ENCODE measurements at regions of chrX and their contacts with region 1.

Region 1: GRCh38 chrX:24054182-24055042 is at the start of gene EIF2S3:
- DNase-seq: peak; percentile 72 to 94 (median 83)
- ATAC-seq: peak; percentile 86
- H3K4me3 ChIP-seq: peak within 1 kb of the TSS; percentile 95
- H3K4me3 Mint-ChIP-seq: no peak within 1 kb of the TSS
- H3K27ac ChIP-seq: peak within 1 kb of the TSS; percentile 89 to 95
- H3K27ac Mint-ChIP-seq: no peak within 1 kb of the TSS
- H3K4me1 ChIP-seq: peaks cover 5% of the 10 kb centered on the region
- H3K4me1 Mint-ChIP-seq: peaks cover 17% of the 10 kb centered on the region
- H3K27me3 ChIP-seq: no peaks in the 10 kb centered on the region
- H3K27me3 Mint-ChIP-seq: no peaks in the 10 kb centered on the region
- CTCF ChIP-seq: peak; percentile 58
- total RNA-seq, gene EIF2S3: 197 to 202 TPM

Region 2: GRCh38 chrX:23694606-23695005 is 359.8 kb before region 1 on chrX:
- CTCF ChIA-PET with region 1: no interaction called
- POLR2A ChIA-PET with region 1: interaction called, 3 read pairs
- intact Hi-C with region 1: loop called (anchors 10 kb)
- DNase-seq: peak; percentile 10 to 73 (median 28)
- ATAC-seq: peak; percentile 71
- H3K4me3 ChIP-seq: no peak overlapping the region
- H3K4me3 Mint-ChIP-seq: no peak overlapping the region
- H3K27ac ChIP-seq: no peak overlapping the region
- H3K27ac Mint-ChIP-seq: no peak overlapping the region
- H3K4me1 ChIP-seq: no peaks in the 10 kb centered on the region
- H3K4me1 Mint-ChIP-seq: no peaks in the 10 kb centered on the region
- H3K27me3 ChIP-seq: no peaks in the 10 kb centered on the region
- H3K27me3 Mint-ChIP-seq: no peaks in the 10 kb centered on the region
- CTCF ChIP-seq: peak; percentile 20

Region 3: DNA sequence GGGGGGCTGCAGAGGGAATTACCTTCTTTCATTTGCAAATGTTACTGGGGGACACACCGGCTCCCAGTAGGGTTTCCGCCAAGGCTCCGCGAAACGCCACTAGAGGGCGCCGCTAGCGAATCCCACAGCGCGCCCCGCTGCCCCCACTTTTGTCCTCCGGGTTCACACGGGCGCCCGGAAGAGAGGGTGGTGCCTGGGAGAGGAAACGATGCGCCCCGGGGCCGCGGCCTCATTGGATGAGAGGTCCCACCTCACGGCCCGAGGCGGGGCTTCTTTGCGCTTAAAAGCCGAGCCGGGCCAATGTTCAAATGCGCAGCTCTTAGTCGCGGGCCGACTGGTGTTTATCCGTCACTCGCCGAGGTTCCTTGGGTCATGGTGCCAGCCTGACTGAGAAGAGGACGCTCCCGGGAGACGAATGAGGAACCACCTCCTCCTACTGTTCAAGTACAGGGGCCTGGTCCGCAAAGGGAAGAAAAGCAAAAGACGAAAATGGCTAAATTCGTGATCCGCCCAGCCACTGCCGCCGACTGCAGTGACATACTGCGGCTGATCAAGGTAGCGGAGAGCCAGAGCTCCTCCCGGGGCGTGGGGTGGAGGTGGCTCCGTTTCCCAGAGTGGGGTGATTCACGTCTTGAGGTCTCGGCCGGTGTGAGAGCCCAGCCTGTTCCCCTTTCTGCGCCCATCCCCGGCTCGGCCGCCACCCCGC is 271.4 kb before region 1 on chrX and contains the start of gene SAT1:
- CTCF ChIA-PET with region 1: interaction called, 6 read pairs
- POLR2A ChIA-PET with region 1: interaction called, 27 read pairs
- intact Hi-C with region 1: loop called (anchors 1 to 10 kb)
- DNase-seq: peak; percentile 84 to 96 (median 91)
- ATAC-seq: peak; percentile 88
- H3K4me3 ChIP-seq: peak within 1 kb of the TSS; percentile 91
- H3K4me3 Mint-ChIP-seq: peak within 1 kb of the TSS; percentile 98
- H3K27ac ChIP-seq: peak within 1 kb of the TSS; percentile 74 to 90
- H3K27ac Mint-ChIP-seq: peak within 1 kb of the TSS; percentile 97
- H3K4me1 ChIP-seq: peaks cover 19% of the 10 kb centered on the region
- H3K4me1 Mint-ChIP-seq: peaks cover 44% of the 10 kb centered on the region
- H3K27me3 ChIP-seq: no peaks in the 10 kb centered on the region
- H3K27me3 Mint-ChIP-seq: no peaks in the 10 kb centered on the region
- CTCF ChIP-seq: peak; percentile 65
- total RNA-seq, gene SAT1: 305 to 312 TPM

Region 4: DNA sequence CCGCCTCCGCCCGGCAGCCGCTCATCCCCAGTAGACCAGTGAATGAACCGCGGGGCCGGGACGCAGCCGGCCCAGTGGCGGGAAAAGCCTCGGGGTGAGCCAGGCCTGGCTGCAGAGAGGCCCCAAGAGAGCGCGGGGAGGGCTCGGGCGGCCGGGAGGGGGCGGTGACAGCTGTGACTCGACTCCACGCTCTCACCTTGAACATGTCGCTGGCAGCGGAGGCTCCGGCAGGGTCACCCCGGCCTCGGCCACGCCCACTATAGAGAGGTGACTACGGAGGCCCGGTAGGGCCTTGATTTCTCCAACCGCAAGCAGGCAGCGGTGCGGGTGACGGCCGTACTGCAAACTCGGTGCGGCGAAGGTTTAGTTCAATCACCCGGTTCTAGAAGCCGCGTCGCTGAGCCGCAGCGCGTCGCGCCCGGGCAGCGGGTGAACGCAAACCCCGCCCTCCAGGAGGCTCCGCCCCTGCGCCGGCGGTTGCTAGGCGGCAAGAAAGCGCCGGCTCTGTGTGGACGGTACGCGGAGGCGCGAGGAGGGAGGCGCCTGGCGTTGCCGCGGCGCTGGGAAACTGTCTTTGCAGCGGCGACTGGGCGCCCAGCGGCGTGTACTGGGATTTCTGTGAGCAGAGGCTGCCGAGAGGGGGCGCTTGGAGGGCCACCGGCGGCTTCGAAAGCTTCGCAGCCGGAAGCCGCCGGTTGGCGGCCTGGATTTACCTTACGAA is 146.8 kb before region 1 on chrX and contains the starts of genes APOO and CXorf58:
- CTCF ChIA-PET with region 1: interaction called, 43 read pairs
- POLR2A ChIA-PET with region 1: interaction called, 60 read pairs
- intact Hi-C with region 1: loop called (anchors 1 to 2 kb)
- DNase-seq: peak; percentile 78 to 97 (median 89)
- ATAC-seq: peak; percentile 92
- H3K4me3 ChIP-seq: peak within 1 kb of the TSS; percentile 61
- H3K4me3 Mint-ChIP-seq: peak within 1 kb of the TSS; percentile 92
- H3K27ac ChIP-seq: peak within 1 kb of the TSS; percentile 75 to 84
- H3K27ac Mint-ChIP-seq: peak within 1 kb of the TSS; percentile 96
- H3K4me1 ChIP-seq: peaks cover 13% of the 10 kb centered on the region
- H3K4me1 Mint-ChIP-seq: peaks cover 15% of the 10 kb centered on the region
- H3K27me3 ChIP-seq: no peaks in the 10 kb centered on the region
- H3K27me3 Mint-ChIP-seq: no peaks in the 10 kb centered on the region
- CTCF ChIP-seq: peak; percentile 53
- total RNA-seq, gene APOO: 3.3 to 4.9 TPM
- total RNA-seq, gene CXorf58: not detected

Region 5: GRCh38 chrX:24024819-24025740 is 29.3 kb before region 1 on chrX:
- CTCF ChIA-PET with region 1: interaction called, 41 read pairs
- POLR2A ChIA-PET with region 1: interaction called, 91 read pairs
- intact Hi-C with region 1: loop called (anchors 2 kb)
- DNase-seq: peak; percentile 63 to 90 (median 76)
- ATAC-seq: peak; percentile 85
- H3K4me3 ChIP-seq: peak overlapping the region; percentile 76
- H3K4me3 Mint-ChIP-seq: peak overlapping the region; percentile 94
- H3K27ac ChIP-seq: peak overlapping the region in 1 of 2 donors; percentile 74
- H3K27ac Mint-ChIP-seq: peak overlapping the region; percentile 94
- H3K4me1 ChIP-seq: peaks cover 7% of the 10 kb centered on the region
- H3K4me1 Mint-ChIP-seq: peaks cover 30% of the 10 kb centered on the region
- H3K27me3 ChIP-seq: no peaks in the 10 kb centered on the region
- H3K27me3 Mint-ChIP-seq: no peaks in the 10 kb centered on the region
- CTCF ChIP-seq: no peak

Region 6: GRCh38 chrX:24178442-24178841 is 124.0 kb after region 1 on chrX:
- CTCF ChIA-PET with region 1: no interaction called
- POLR2A ChIA-PET with region 1: no interaction called
- intact Hi-C with region 1: no loop called
- DNase-seq: no peak
- ATAC-seq: no peak
- H3K4me3 ChIP-seq: no peak overlapping the region
- H3K4me3 Mint-ChIP-seq: no peak overlapping the region
- H3K27ac ChIP-seq: no peak overlapping the region
- H3K27ac Mint-ChIP-seq: no peak overlapping the region
- H3K4me1 ChIP-seq: no peaks in the 10 kb centered on the region
- H3K4me1 Mint-ChIP-seq: peaks cover 5% of the 10 kb centered on the region
- H3K27me3 ChIP-seq: no peaks in the 10 kb centered on the region
- H3K27me3 Mint-ChIP-seq: no peaks in the 10 kb centered on the region
- CTCF ChIP-seq: no peak

Region 7: DNA sequence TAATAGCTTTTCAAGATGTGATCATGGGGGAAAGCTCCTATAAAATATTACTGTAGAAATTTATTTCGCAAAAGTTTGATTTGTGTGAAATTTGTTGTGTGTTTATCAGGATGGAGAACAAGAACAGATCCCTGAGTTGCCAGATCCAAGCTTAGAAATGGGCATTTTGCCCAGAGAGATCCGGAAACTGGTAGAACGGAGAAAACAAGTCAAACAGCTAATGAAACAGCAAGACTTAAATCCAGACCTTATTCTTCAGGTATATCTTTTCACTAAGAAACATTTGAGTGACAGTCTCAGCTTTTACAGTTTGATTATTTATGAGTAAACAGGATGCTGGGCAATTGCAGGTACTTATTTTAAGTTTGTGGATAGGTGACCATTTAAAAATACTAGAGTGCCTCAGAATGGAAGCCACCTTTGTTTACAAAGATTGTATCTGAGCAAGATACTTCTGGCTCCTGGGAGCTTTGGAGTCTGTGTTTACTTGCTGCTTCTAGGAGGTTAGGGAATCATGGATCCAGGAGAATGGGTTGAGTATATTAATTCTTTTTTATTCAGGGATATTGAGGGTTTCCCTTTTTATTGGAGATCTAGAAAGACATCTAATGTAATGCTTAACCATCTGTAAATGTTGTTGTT is 693.9 kb after region 1 on chrX:
- CTCF ChIA-PET with region 1: no interaction called
- POLR2A ChIA-PET with region 1: no interaction called
- intact Hi-C with region 1: no loop called
- DNase-seq: no peak
- ATAC-seq: no peak
- H3K4me3 ChIP-seq: no peak overlapping the region
- H3K4me3 Mint-ChIP-seq: no peak overlapping the region
- H3K27ac ChIP-seq: no peak overlapping the region
- H3K27ac Mint-ChIP-seq: no peak overlapping the region
- H3K4me1 ChIP-seq: no peaks in the 10 kb centered on the region
- H3K4me1 Mint-ChIP-seq: no peaks in the 10 kb centered on the region
- H3K27me3 ChIP-seq: no peaks in the 10 kb centered on the region
- H3K27me3 Mint-ChIP-seq: no peaks in the 10 kb centered on the region
- CTCF ChIP-seq: no peak

Measured in CD4-positive, alpha-beta T cell (primary cell).